HEK293 (cell line): ENCODE measurements at regions of chr5 and their contacts with region 1.

Region 1: GRCh38 chr5:7815892-7816534 is 34.9 kb downstream of the CFAP90 start:
- H3K4me3 ChIP-seq: no peak overlapping the region
- H3K27ac ChIP-seq: no peak overlapping the region
- H3K4me1 ChIP-seq: peaks cover 3% of the 10 kb centered on the region; the same call in 1 of the 2 replicates
- CTCF ChIP-seq: peak; percentile 95

Region 2: DNA sequence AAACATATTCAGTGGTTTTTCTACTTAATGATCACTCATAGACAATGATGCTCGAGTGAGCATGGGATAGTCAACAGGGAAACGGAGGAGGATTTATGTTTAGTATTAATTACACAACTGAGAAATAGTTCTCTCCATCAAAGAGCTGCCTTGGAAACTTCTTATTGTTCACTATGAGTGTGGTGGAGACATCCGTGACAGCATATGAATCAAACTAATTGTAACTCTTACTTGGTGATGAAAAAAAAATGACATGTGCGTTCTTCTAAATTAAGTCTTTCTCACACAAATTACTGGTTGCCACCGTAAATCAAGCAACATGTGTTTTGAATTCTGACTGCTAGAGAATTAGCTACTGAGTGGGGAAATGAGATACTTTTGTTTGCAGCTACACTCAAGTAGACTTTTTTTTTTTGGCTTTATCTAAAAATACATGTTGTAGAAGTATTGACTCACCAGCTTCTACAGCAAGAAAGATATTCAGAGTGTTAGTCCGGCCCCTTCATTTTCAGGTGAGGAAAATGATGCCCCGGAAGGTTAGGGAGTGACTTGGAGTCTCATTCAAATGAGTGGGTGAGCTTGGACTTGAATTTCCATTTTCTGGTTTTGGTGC is 144.5 kb before region 1 on chr5:
- CTCF ChIA-PET with region 1: no interaction called
- POLR2A ChIA-PET with region 1: no interaction called
- H3K4me3 ChIP-seq: no peak overlapping the region
- H3K27ac ChIP-seq: no peak overlapping the region
- H3K4me1 ChIP-seq: no peaks in the 10 kb centered on the region
- CTCF ChIP-seq: no peak

Region 3: DNA sequence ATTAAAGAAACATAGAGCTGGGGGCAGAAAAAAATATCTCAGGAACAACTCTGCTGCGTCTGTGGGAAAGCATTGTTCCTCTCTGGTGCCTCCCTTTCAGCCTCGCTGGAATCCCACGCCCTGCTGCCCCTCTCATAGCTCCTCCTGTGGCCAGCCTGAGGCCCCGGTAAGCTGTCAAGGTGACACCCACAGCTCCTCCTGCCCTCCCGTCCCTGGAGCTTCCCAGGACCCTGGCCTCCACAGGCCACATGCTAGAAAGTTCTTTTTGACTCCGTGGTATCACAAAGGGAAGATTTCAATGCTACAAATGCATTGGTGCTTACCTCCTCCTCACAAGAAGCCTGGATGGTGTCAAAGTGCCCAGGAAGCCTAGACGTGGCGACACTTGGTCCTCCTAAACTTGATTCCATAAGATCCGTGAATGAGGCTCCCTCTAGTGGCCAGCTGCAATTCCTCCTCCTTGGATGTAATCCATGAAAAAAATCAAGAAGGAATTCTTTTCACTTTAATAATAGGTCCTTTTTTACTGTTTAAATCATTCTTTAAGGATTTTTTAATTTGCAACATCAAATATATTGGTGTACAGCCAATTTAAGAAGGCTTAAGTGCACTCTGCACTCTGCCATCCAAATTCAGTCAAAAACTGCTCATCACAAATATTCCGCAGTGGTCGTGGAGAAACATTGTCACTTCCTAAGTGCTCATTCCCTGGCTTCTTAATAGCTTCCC is 70.0 kb before region 1 on chr5:
- CTCF ChIA-PET with region 1: interaction called, 20 read pairs
- POLR2A ChIA-PET with region 1: no interaction called
- H3K4me3 ChIP-seq: no peak overlapping the region
- H3K27ac ChIP-seq: no peak overlapping the region
- H3K4me1 ChIP-seq: no peaks in the 10 kb centered on the region
- CTCF ChIP-seq: peak; percentile 60

Region 4: DNA sequence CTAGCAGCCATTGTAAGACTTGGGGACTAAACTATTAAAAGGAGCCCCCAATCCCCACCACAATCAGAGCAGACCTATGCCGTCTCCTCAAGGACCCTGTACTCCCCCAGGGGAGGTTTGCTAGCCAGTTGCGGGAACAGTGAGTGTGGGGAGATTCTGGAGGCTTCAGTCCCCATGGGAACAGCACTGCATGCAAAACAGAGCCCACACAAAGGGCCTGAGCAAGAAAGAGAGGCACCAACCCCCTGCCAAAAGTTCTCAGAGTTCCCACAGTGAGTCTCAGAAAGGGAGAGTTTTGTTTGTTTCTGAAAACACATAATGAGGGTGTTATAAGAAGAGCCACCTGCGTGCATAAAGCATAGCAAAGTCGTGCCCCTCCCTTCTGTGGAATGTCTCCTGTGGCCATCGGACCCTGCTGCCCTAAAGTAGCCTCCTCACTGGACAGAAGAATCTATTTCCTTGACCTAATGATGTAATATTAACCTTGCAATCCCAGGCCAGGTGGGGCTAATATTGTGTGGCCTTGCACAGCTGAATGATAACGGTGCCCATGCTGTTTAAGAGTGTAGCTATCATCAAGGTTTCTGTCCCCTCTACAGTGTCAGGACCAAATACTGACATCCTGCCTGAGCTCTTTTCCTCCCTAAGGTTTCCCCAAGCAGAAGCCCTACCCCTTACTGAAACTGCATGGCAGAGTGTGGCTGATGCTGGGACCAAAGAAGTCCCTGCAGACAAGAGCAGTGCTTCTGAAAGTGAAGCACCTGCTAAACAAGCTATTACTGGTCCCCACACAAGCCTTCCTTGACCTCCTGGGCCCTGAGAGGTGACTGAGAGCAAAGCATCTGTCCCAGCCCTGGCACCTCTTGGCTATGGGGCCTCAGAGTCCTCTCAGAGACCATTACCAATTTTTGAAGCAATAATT is 21.5 kb before region 1 on chr5:
- CTCF ChIA-PET with region 1: interaction called, 12 read pairs
- POLR2A ChIA-PET with region 1: no interaction called
- H3K4me3 ChIP-seq: no peak overlapping the region
- H3K27ac ChIP-seq: no peak overlapping the region
- H3K4me1 ChIP-seq: no peaks in the 10 kb centered on the region
- CTCF ChIP-seq: no peak

Region 5: DNA sequence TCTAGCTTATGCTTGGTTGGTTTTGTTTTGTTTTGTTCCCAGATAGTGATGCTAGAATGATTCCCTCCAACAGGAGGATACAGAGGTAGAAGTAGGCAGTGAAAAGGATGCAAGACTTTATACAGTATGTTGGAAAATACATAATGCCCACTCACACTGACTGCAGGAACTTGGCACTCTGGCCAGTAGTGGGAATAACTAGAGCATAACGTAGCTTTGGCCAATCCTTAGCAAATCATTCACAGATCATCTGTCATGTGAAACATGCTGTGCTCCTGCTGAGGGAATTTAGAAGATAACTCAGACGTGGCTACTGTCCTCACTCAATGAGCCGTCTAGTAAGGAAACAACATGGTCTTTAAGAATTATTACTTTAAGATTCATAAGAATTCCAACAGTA is 21.4 kb after region 1 on chr5:
- CTCF ChIA-PET with region 1: interaction called, 46 read pairs
- POLR2A ChIA-PET with region 1: no interaction called
- H3K4me3 ChIP-seq: no peak overlapping the region
- H3K27ac ChIP-seq: no peak overlapping the region
- H3K4me1 ChIP-seq: no peaks in the 10 kb centered on the region
- CTCF ChIP-seq: no peak

Region 6: DNA sequence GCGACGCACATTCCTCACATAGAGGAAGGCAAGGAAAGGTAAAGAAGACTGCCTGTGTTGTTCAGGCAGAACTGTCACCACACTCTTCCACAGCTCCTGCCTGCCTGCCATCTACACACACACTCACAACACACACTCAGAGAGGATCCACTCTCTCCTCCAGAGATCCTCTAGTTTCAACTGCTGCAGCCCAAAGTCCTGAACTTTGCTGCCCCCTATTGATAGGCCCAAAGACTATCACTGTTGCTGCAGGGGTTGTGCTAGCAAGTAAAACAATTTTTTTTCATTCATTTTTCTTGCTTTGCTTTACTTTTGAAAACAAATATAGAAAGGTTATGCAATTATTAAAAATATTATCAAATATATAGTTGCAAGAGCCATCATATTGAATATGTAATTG is 40.8 kb after region 1 on chr5:
- CTCF ChIA-PET with region 1: interaction called, 23 read pairs
- POLR2A ChIA-PET with region 1: no interaction called
- H3K4me3 ChIP-seq: no peak overlapping the region
- H3K27ac ChIP-seq: no peak overlapping the region
- H3K4me1 ChIP-seq: no peaks in the 10 kb centered on the region; the same call in 1 of the 2 replicates
- CTCF ChIP-seq: peak; percentile 62; the same call in 1 of the 2 replicates

Region 7: GRCh38 chr5:7991125-7991821 is 175.3 kb after region 1 on chr5:
- CTCF ChIA-PET with region 1: no interaction called
- POLR2A ChIA-PET with region 1: no interaction called
- H3K4me3 ChIP-seq: no peak overlapping the region
- H3K27ac ChIP-seq: no peak overlapping the region
- H3K4me1 ChIP-seq: no peaks in the 10 kb centered on the region
- CTCF ChIP-seq: no peak